ENCODE measurements at regions of chr2 and their contacts with region 1.

Region 1: GRCh38 chr2:84459018-84459943 is at the start of gene SUCLG1:
- DNase-seq: peak; percentile 96
- H3K4me3 Mint-ChIP-seq: peak within 1 kb of the TSS; percentile 94
- H3K27ac Mint-ChIP-seq: peak within 1 kb of the TSS; percentile 97
- H3K4me1 Mint-ChIP-seq: peaks cover 33% of the 10 kb centered on the region
- H3K27me3 Mint-ChIP-seq: no peaks in the 10 kb centered on the region
- total RNA-seq, gene SUCLG1: 71.9 and 72.6 TPM in 2 replicates

Region 2: DNA sequence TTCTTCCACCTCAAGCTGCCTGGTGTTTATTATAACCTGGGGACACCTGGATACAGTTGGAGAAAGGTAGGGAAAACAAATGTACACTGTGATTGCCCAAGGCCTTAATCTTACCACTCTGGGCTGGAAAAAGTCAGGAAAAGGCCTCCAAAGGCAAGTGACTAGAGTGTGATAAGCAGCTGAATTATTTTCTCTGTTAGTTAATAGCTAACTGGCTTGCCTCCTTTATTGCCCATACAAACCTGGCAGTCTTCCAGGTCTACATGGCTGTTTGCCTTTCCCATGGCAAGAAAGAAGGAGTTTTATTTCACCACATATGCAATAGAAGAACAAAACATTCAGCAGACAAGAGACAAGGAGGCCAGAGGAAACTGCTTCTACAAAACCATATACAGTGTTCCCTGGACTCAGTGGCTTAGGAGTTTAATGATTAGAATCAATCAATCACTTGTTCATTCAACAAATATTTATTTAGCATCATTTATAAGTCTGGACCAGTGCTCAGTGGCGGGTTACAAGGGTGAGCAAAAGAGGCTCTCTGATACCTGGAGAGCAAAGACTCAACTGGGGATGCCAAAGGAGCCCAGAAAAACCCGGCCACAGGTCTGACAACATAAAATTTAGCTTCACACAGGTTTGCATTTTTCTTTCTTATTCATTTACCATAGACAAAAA is 27.3 kb after region 1 on chr2:
- intact Hi-C with region 1: no loop called
- DNase-seq: no peak
- H3K4me3 Mint-ChIP-seq: no peak overlapping the region
- H3K27ac Mint-ChIP-seq: no peak overlapping the region
- H3K4me1 Mint-ChIP-seq: peaks cover 10% of the 10 kb centered on the region
- H3K27me3 Mint-ChIP-seq: no peaks in the 10 kb centered on the region

Region 3: DNA sequence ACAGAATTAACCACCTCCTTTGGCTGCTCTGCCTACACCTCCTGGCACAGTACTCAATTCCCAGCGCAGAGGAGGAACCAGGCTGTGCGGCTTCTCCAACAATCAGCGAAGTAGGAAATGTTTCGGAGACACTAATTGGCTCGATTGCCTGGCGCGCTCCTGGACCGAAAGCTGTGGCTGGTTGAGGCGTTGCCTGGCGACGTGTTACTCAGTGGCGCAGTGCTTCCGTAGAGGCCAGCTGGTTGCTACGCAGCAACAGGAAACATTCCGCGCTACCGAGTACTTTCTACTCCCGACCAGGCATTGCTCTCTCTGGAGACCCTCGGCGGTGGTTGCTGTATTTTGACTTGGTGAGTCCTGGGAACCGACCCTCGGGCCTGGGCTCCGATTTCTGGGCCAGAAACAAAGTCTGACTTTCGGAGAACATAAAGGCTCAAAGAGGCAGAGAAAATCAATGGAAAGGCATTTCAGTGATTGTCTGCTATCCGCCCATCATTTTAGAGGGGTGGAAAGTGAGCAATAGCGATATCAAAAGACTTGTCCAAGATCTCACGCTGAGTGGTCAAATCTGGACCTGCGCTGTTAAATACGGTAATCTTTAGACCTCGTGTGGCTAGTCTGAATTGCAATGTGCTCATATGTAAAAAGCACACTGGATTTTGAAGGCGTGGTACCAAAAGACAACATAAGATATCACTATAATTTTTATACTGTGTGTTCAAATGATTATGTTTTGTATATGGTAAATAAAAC is 57.1 kb after region 1 on chr2 and contains the start of gene DNAH6:
- intact Hi-C with region 1: loop called (anchors 2 kb)
- DNase-seq: peak; percentile 96
- H3K4me3 Mint-ChIP-seq: peak within 1 kb of the TSS; percentile 88
- H3K27ac Mint-ChIP-seq: peak within 1 kb of the TSS; percentile 47
- H3K4me1 Mint-ChIP-seq: peaks cover 11% of the 10 kb centered on the region
- H3K27me3 Mint-ChIP-seq: peaks cover 27% of the 10 kb centered on the region
- total RNA-seq, gene DNAH6: 0.17 and 0.23 TPM in 2 replicates